Posterior vena cava (tissue), 2 donors: ENCODE measurements at regions of chr3 and their contacts with region 1.

Region 1: GRCh38 chr3:126777366-126777765 is 73.3 kb downstream of the CHCHD6 start:
- DNase-seq: no peak

Region 2: GRCh38 chr3:128036119-128036518 is 1258.8 kb after region 1 on chr3:
- intact Hi-C with region 1: loop called in 1 of 2 experiments (anchors 5 kb)
- DNase-seq: no peak